ENCODE measurements at regions of chr21 and their contacts with region 1.

Region 1: GRCh38 chr21:34630536-34631143 is 15.7 kb upstream of the RCAN1 start:
- DNase-seq: peak; percentile 33
- ATAC-seq: peak; percentile 56
- H3K4me3 Mint-ChIP-seq: no peak overlapping the region
- H3K27ac Mint-ChIP-seq: no peak overlapping the region
- H3K4me1 Mint-ChIP-seq: no peaks in the 10 kb centered on the region
- H3K27me3 Mint-ChIP-seq: no peaks in the 10 kb centered on the region
- CTCF ChIP-seq: peak; percentile 93

Region 2: GRCh38 chr21:34367321-34367935 is 263.2 kb before region 1 on chr21:
- CTCF ChIA-PET with region 1: interaction called, 23 read pairs
- POLR2A ChIA-PET with region 1: no interaction called
- intact Hi-C with region 1: no loop called
- DNase-seq: peak; percentile 71
- ATAC-seq: peak; percentile 60
- H3K4me3 Mint-ChIP-seq: no peak overlapping the region
- H3K27ac Mint-ChIP-seq: no peak overlapping the region
- H3K4me1 Mint-ChIP-seq: peaks cover 2% of the 10 kb centered on the region
- H3K27me3 Mint-ChIP-seq: peaks cover 5% of the 10 kb centered on the region
- CTCF ChIP-seq: peak; percentile 66

Region 3: GRCh38 chr21:34526618-34527290 is 103.9 kb before region 1 on chr21:
- CTCF ChIA-PET with region 1: interaction called, 11 read pairs
- POLR2A ChIA-PET with region 1: no interaction called
- intact Hi-C with region 1: no loop called
- DNase-seq: peak; percentile 70
- ATAC-seq: peak; percentile 76
- H3K4me3 Mint-ChIP-seq: peak overlapping the region; percentile 52
- H3K27ac Mint-ChIP-seq: peak overlapping the region; percentile 85
- H3K4me1 Mint-ChIP-seq: peaks cover 25% of the 10 kb centered on the region
- H3K27me3 Mint-ChIP-seq: no peaks in the 10 kb centered on the region
- CTCF ChIP-seq: no peak

Region 4: GRCh38 chr21:34614633-34615486 is 15.8 kb before region 1 on chr21 and contains the start of gene RCAN1:
- CTCF ChIA-PET with region 1: interaction called, 12 read pairs
- POLR2A ChIA-PET with region 1: interaction called, 4 read pairs
- intact Hi-C with region 1: no loop called
- DNase-seq: peak; percentile 89
- ATAC-seq: peak; percentile 97
- H3K4me3 Mint-ChIP-seq: peak within 1 kb of the TSS; percentile 84
- H3K27ac Mint-ChIP-seq: peak within 1 kb of the TSS; percentile 85
- H3K4me1 Mint-ChIP-seq: peaks cover 17% of the 10 kb centered on the region
- H3K27me3 Mint-ChIP-seq: no peaks in the 10 kb centered on the region
- CTCF ChIP-seq: no peak
- total RNA-seq, gene RCAN1: 6.1 to 7.8 TPM

Region 5: DNA sequence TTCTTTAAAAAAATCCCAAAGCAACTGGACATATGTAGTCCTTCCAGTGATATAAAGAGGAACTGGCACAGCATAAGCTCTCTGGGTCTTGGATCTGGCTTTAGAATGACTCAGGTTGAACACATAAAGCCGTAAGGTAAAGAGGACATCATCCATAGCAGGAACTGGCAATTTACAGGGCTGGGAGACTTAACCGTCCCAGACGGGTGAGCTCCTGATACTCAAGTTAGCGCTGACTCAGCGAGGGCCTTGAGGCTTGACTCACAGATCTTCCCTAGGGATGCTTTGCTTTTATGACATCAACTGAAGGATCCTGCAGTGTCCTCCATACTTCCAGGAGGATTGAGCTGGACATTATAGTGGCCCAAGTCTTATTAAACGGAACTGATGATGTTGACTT is 192.3 kb after region 1 on chr21:
- CTCF ChIA-PET with region 1: no interaction called
- POLR2A ChIA-PET with region 1: no interaction called
- intact Hi-C with region 1: no loop called
- DNase-seq: no peak
- ATAC-seq: no peak
- H3K4me3 Mint-ChIP-seq: no peak overlapping the region
- H3K27ac Mint-ChIP-seq: no peak overlapping the region
- H3K4me1 Mint-ChIP-seq: peaks cover 2% of the 10 kb centered on the region
- H3K27me3 Mint-ChIP-seq: no peaks in the 10 kb centered on the region
- CTCF ChIP-seq: no peak

Region 6: DNA sequence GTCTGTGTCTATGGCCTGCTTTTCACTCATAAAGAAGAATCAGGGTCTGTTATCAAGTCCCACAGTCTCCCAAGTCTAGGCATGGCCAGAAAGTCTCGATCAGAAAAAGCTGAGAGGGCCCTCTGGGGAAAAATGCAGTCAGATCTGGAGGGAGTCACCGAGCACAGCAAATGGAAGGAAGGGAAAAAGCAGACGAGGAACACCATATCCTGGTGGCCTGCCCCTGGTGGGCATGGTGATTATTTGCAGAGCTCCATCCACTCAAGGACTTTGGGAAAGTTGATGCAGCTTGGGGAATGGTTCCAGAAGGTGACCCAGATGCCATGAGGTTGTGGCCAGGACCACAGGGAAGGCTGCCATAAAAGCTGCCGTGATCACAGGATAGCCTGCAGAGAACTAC is 227.2 kb after region 1 on chr21:
- CTCF ChIA-PET with region 1: no interaction called
- POLR2A ChIA-PET with region 1: no interaction called
- intact Hi-C with region 1: no loop called
- DNase-seq: no peak
- ATAC-seq: no peak
- H3K4me3 Mint-ChIP-seq: no peak overlapping the region
- H3K27ac Mint-ChIP-seq: no peak overlapping the region
- H3K4me1 Mint-ChIP-seq: peaks cover 10% of the 10 kb centered on the region
- H3K27me3 Mint-ChIP-seq: no peaks in the 10 kb centered on the region
- CTCF ChIP-seq: no peak